Activated CD8-positive, alpha-beta memory T cell treated with anti-CD3 and anti-CD28 coated beads, Interleukin-2, amount 10 ng/mL, durations not matched to agents 7 days and 5 days (primary cell): ENCODE measurements at regions of chr10 and their contacts with region 1.

Region 1: GRCh38 chr10:129332476-129332875 is 134.6 kb upstream of the MGMT start:
- DNase-seq: peak; percentile 44
- ATAC-seq: no peak
- H3K4me3 Mint-ChIP-seq: no peak overlapping the region
- H3K27ac Mint-ChIP-seq: no peak overlapping the region
- H3K4me1 Mint-ChIP-seq: no peaks in the 10 kb centered on the region
- H3K27me3 Mint-ChIP-seq: peaks cover 6% of the 10 kb centered on the region

Region 2: GRCh38 chr10:129030996-129031843 is 301.3 kb before region 1 on chr10:
- CTCF ChIA-PET with region 1: interaction called, 46 read pairs
- DNase-seq: peak; percentile 54
- ATAC-seq: peak; percentile 58
- H3K4me3 Mint-ChIP-seq: no peak overlapping the region
- H3K27ac Mint-ChIP-seq: no peak overlapping the region
- H3K4me1 Mint-ChIP-seq: peaks cover 21% of the 10 kb centered on the region
- H3K27me3 Mint-ChIP-seq: peaks cover 18% of the 10 kb centered on the region

Region 3: DNA sequence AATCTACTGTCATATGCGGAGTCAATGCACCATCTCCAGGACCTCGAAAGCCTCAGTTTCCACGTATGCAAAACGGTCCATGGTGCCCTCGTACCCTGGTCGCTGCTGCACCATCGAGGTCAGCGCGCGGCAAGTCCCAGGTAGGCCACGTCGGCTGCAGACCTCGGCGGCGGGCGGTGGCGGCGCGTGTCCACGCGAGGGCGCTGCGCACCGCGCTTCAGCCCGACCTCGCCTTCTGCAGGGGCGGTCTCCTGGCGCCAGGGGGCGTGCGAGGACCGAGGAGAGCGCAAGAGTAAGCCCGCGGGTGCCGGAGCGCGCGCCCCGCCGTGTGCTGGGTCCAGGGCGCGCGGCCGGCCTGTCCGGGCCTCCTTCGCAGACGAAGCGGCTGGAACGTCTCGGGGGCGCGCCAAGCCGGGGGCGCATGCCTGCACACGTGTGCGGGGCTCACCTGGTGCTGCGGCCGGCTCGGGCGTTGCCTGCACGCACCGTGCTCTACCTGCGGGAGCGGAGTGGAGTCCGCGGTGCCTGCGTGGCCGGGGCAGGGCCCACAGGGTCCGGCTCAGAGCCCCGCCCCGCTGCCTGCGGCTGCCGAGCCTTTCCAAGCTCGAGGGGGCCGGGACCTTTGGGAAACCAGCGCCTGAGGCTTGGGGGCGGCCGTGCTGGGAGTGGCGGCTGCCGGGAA is 857.7 kb after region 1 on chr10:
- CTCF ChIA-PET with region 1: no interaction called
- DNase-seq: peak; percentile 88
- ATAC-seq: peak; percentile 95
- H3K4me3 Mint-ChIP-seq: no peak overlapping the region
- H3K27ac Mint-ChIP-seq: no peak overlapping the region
- H3K4me1 Mint-ChIP-seq: peaks cover 4% of the 10 kb centered on the region
- H3K27me3 Mint-ChIP-seq: peaks cover 9% of the 10 kb centered on the region